Activated CD4-positive, alpha-beta T cell treated with anti-CD3 and anti-CD28 coated beads for 36 hours (primary cell): ENCODE measurements at regions of chr1 and their contacts with region 1.

Region 1: DNA sequence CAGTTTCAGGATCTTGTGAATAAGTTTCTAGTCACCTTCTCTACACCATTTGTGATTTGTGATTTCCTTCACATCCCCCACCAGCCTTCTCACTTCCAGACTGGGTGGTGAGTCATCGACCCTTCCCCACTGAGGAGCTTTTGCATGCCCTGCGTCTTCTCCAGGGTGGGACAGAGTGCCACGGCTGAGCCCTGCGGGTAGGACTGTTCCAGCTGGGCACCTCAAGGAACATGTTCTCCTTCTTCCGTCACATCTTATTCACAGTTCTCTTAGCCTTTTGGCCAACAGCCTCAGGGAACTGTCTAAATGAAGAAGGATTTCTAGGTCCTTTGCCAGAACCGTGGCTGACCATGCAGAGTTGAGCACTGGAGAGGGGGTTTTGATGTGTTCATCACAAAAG is 116.5 kb downstream of the TMEM53 start:
- DNase-seq: no peak
- ATAC-seq: no peak
- H3K4me3 Mint-ChIP-seq: no peak overlapping the region
- H3K27ac Mint-ChIP-seq: no peak overlapping the region
- H3K4me1 Mint-ChIP-seq: no peaks in the 10 kb centered on the region
- H3K27me3 Mint-ChIP-seq: peaks cover 3% of the 10 kb centered on the region

Region 2: GRCh38 chr1:44571712-44572571 is 14.2 kb after region 1 on chr1:
- CTCF ChIA-PET with region 1: interaction called, 29 read pairs
- POLR2A ChIA-PET with region 1: no interaction called
- intact Hi-C with region 1: no loop called
- DNase-seq: peak; percentile 20
- ATAC-seq: peak; percentile 80
- H3K4me3 Mint-ChIP-seq: no peak overlapping the region
- H3K27ac Mint-ChIP-seq: no peak overlapping the region
- H3K4me1 Mint-ChIP-seq: no peaks in the 10 kb centered on the region
- H3K27me3 Mint-ChIP-seq: peaks cover 5% of the 10 kb centered on the region